Activated T-helper 1 cell treated with anti-CD3 and anti-CD28 coated beads, Interleukin-12 subunit alpha, Interleukin-12 subunit beta, Interleukin-2, Interleukin-4 antibody, amounts not matched to agents 30 ng/mL and 10 ng/mL and 1 ng/mL, durations not matched to agents 14 hours and 24 hours and 36 hours (primary cell): ENCODE measurements at regions of chr1 and their contacts with region 1.

Region 1: GRCh38 chr1:109397538-109398342 is at the start of gene SORT1:
- DNase-seq: peak; percentile 45
- H3K4me3 Mint-ChIP-seq: peak within 1 kb of the TSS; percentile 86
- H3K27ac Mint-ChIP-seq: peak within 1 kb of the TSS; percentile 38
- H3K4me1 Mint-ChIP-seq: peaks cover 25% of the 10 kb centered on the region
- H3K27me3 Mint-ChIP-seq: peaks cover 42% of the 10 kb centered on the region
- total RNA-seq, gene SORT1: 1.4 and 1.5 TPM in 2 replicates

Region 2: GRCh38 chr1:109201123-109201703 is 196.5 kb before region 1 on chr1:
- intact Hi-C with region 1: loop called (anchors 1 kb)
- DNase-seq: no peak
- H3K4me3 Mint-ChIP-seq: no peak overlapping the region
- H3K27ac Mint-ChIP-seq: peak overlapping the region; percentile 26
- H3K4me1 Mint-ChIP-seq: peaks cover 38% of the 10 kb centered on the region
- H3K27me3 Mint-ChIP-seq: peaks cover 2% of the 10 kb centered on the region

Region 3: DNA sequence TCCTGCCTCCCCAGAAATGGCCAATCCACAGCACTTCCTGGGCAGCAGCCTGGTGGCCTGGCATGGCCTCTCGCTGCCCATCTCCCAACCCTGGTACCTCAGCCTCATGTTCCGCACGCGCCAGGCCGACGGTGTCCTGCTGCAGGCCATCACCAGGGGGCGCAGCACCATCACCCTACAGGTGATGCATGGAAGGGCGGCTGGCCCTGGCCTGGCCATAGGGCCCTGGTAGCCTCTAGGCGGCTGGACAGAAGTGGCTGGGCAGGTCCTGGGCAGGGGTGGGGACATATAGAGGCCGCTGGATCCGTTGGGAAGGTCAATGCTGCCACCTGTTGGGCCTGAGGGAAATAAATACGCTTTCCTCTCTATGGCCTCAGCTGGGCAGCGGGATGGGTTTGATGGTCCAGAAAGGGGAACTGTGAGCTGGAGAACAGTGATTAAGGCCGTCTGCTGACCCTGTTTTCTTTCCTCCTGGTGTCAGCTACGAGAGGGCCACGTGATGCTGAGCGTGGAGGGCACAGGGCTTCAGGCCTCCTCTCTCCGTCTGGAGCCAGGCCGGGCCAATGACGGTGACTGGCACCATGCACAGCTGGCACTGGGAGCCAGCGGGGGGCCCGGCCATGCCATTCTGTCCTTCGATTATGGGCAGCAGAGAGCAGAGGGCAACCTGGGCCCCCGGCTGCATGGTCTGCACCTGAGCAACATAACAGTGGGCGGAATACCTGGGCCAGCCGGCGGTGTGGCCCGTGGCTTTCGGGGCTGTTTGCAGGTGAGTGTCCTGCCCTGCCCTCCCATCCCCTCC is 133.9 kb before region 1 on chr1:
- intact Hi-C with region 1: loop called (anchors 1 kb)
- DNase-seq: peak; percentile 71
- H3K4me3 Mint-ChIP-seq: no peak overlapping the region
- H3K27ac Mint-ChIP-seq: peak overlapping the region; percentile 49
- H3K4me1 Mint-ChIP-seq: no peaks in the 10 kb centered on the region
- H3K27me3 Mint-ChIP-seq: no peaks in the 10 kb centered on the region

Region 4: GRCh38 chr1:109277434-109278204 is 120.1 kb before region 1 on chr1:
- intact Hi-C with region 1: loop called (anchors 1 kb)
- DNase-seq: peak; percentile 58
- H3K4me3 Mint-ChIP-seq: no peak overlapping the region
- H3K27ac Mint-ChIP-seq: no peak overlapping the region
- H3K4me1 Mint-ChIP-seq: peaks cover 16% of the 10 kb centered on the region
- H3K27me3 Mint-ChIP-seq: no peaks in the 10 kb centered on the region

Region 5: DNA sequence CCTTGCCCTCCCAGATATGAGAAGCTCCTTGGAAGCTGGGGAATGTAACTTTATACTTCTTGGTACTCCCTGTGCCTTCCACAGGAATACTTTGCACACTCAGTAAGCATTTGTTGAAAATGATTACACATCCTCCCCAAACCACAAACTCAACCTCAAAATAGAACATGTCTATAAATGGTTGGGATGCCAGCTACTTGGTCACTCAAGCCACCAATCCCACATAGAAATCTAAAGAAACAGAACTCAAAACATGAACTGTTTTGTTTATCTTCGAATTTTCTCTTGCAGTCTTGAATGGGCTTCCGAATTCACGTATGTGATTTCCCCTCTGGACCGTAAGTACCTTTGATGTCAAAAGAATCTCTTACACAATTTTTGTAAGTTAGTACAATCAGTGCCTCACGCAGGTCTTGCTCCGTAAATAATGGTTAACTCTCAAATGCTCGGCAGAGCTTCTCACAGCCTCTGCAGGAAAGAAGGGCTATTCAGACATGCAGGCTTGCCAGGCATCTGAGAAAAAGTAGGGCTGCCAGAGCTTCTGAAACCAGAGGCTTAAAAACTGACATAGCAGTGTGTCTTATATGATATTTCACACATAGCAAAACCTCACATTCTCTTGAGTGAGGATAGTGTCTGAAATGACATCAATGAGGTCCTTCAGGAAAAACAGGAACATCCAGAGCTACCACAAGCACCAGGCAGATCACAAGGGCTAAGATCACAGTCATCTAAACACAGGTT is 26.9 kb before region 1 on chr1:
- intact Hi-C with region 1: loop called (anchors 2 kb)
- DNase-seq: peak; percentile 1
- H3K4me3 Mint-ChIP-seq: peak overlapping the region; percentile 13
- H3K27ac Mint-ChIP-seq: peak overlapping the region; percentile 79
- H3K4me1 Mint-ChIP-seq: peaks cover 50% of the 10 kb centered on the region
- H3K27me3 Mint-ChIP-seq: peaks cover 12% of the 10 kb centered on the region